ENCODE measurements at regions of chr2 and their contacts with region 1.

Region 1: GRCh38 chr2:110157153-110157793 is 41.7 kb upstream of the MALL start:
- DNase-seq: peak in 4 of 5 donors; percentile 7 to 13 (median 10)
- H3K4me3 ChIP-seq: no peak overlapping the region
- H3K4me3 Mint-ChIP-seq: peak overlapping the region in 1 of 8 donors; percentile 12
- H3K27ac ChIP-seq: no peak overlapping the region
- H3K27ac Mint-ChIP-seq: peak overlapping the region in 1 of 7 donors; percentile 62
- H3K4me1 ChIP-seq: no peaks in the 10 kb centered on the region
- H3K4me1 Mint-ChIP-seq: peaks cover 0 to 7% (median 6%) of the 10 kb centered on the region in 4 donors
- H3K27me3 ChIP-seq: no peaks in the 10 kb centered on the region
- H3K27me3 Mint-ChIP-seq: peaks cover 3 to 7% of the 10 kb centered on the region in 2 donors

Region 2: GRCh38 chr2:110116033-110116710 is 41.1 kb before region 1 on chr2:
- CTCF ChIA-PET with region 1: no interaction called
- POLR2A ChIA-PET with region 1: no interaction called
- intact Hi-C with region 1: no loop called
- DNase-seq: no peak
- H3K4me3 ChIP-seq: no peak overlapping the region
- H3K4me3 Mint-ChIP-seq: no peak overlapping the region
- H3K27ac ChIP-seq: no peak overlapping the region
- H3K27ac Mint-ChIP-seq: no peak overlapping the region
- H3K4me1 ChIP-seq: no peaks in the 10 kb centered on the region
- H3K4me1 Mint-ChIP-seq: peaks cover 0 to 4% (median 0%) of the 10 kb centered on the region in 4 donors
- H3K27me3 ChIP-seq: peaks cover 19% of the 10 kb centered on the region
- H3K27me3 Mint-ChIP-seq: peaks cover 40 to 49% of the 10 kb centered on the region in 2 donors

Region 3: DNA sequence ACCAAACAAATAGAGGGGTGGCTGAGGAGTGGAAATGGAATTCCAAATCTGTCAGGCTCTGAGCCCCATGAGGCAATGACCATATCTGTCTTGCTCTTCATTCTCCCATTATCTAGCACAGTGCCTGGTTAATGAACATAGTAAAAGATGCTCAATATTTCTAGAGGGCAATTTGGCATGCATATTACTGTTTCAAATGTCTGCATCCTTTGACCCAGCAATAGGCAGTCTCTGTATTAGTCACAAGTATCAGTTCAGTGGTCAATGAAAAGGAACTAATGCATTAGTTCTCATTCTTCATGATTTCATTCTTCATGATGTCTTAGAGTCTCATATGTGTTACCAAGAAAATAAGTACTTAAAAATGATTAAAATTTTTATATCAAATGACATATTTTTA is 13.3 kb before region 1 on chr2:
- CTCF ChIA-PET with region 1: no interaction called
- POLR2A ChIA-PET with region 1: no interaction called
- intact Hi-C with region 1: no loop called
- DNase-seq: no peak
- H3K4me3 ChIP-seq: no peak overlapping the region
- H3K4me3 Mint-ChIP-seq: no peak overlapping the region
- H3K27ac ChIP-seq: no peak overlapping the region
- H3K27ac Mint-ChIP-seq: no peak overlapping the region
- H3K4me1 ChIP-seq: no peaks in the 10 kb centered on the region
- H3K4me1 Mint-ChIP-seq: no peaks in the 10 kb centered on the region
- H3K27me3 ChIP-seq: no peaks in the 10 kb centered on the region
- H3K27me3 Mint-ChIP-seq: peaks cover 4 to 7% of the 10 kb centered on the region in 2 donors

Region 4: DNA sequence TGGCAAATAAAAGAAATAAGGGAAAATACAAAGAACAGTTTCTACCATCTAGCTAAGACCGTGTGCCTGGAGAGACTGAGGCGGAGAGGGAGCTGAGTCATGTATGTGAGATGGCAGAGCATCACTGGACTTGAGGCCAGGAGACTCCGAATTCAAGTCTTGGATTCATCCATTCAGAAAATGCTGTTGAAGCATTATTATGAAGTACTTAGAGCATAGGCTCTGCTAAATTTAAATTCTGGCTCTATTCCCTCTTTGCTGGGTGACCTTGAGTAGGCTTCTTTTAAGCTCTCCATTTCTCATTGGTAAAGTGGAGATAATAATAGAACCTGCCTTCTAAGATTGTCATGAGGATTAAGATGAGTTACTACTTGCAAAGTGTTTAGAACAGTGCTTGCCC is 12.8 kb after region 1 on chr2:
- CTCF ChIA-PET with region 1: interaction called, 10 read pairs
- POLR2A ChIA-PET with region 1: no interaction called
- intact Hi-C with region 1: no loop called
- DNase-seq: no peak
- H3K4me3 ChIP-seq: no peak overlapping the region
- H3K4me3 Mint-ChIP-seq: peak overlapping the region in 4 of 8 donors; percentile 37 to 74 (median 54)
- H3K27ac ChIP-seq: no peak overlapping the region
- H3K27ac Mint-ChIP-seq: no peak overlapping the region
- H3K4me1 ChIP-seq: no peaks in the 10 kb centered on the region
- H3K4me1 Mint-ChIP-seq: peaks cover 4 to 5% (median 5%) of the 10 kb centered on the region in 4 donors
- H3K27me3 ChIP-seq: no peaks in the 10 kb centered on the region
- H3K27me3 Mint-ChIP-seq: peaks cover 0 to under 1% of the 10 kb centered on the region in 2 donors